CD4-positive, alpha-beta memory T cell (primary cell): ENCODE measurements at regions of chr16 and their contacts with region 1.

Region 1: GRCh38 chr16:66562407-66562806 is 3.8 kb upstream of the CMTM1 start:
- DNase-seq: peak in 3 of 5 donors; percentile 28 to 42 (median 31)
- H3K4me3 ChIP-seq: no peak overlapping the region
- H3K4me3 Mint-ChIP-seq: peak overlapping the region in 6 of 8 donors; percentile 15 to 86 (median 64)
- H3K27ac ChIP-seq: no peak overlapping the region
- H3K27ac Mint-ChIP-seq: peak overlapping the region; percentile 58 to 80 (median 73)
- H3K4me1 ChIP-seq: peaks cover 73% of the 10 kb centered on the region
- H3K4me1 Mint-ChIP-seq: peaks cover 53 to 74% (median 63%) of the 10 kb centered on the region in 4 donors
- H3K27me3 ChIP-seq: no peaks in the 10 kb centered on the region
- H3K27me3 Mint-ChIP-seq: no peaks in the 10 kb centered on the region

Region 2: DNA sequence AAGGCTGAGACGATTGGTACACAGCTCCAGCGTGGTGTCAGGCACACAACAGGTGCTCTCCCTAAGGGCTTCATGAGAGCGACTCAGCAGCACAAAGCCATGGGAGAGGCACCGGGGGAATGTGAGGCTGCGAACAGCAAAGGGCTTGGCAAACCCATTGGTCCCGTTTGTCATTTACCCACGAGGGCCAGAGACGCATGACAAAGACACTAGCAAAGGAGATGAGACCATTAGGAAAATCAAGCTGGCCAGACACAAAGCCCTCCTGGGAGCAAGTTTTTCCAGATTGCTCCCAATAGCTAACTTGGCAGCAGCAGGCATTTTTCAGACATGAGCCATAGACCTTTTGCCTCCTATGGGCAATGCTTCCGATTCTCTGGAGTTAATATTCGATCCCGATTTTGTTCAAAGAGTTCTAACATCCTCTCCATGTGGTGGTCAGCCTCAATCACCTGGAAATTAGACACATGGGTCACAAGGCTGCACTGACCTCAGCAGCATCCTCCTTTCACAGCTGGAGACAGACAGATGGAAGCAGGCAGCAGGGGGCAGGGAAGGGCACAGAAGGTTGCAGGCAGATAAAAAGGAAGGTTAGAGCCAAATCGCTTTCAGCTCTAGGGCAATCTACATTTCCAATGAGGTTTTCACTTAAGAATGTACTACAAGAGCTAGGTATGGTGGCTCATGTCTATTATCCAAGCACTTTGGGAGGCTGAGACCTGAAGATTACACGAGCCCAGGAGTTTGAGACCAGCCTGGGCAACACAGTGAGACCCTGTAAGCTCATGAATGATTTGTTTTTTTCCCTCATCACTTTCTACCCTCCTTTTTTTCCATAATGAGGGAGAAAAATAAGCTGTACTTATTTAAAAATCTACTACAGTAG is 50.5 kb before region 1 on chr16:
- CTCF ChIA-PET with region 1: interaction called, 28 read pairs
- POLR2A ChIA-PET with region 1: interaction called, 9 read pairs
- intact Hi-C with region 1: no loop called
- DNase-seq: no peak
- H3K4me3 ChIP-seq: no peak overlapping the region
- H3K4me3 Mint-ChIP-seq: peak overlapping the region in 1 of 8 donors; percentile 50
- H3K27ac ChIP-seq: no peak overlapping the region
- H3K27ac Mint-ChIP-seq: peak overlapping the region in 5 of 7 donors; percentile 13 to 79 (median 30)
- H3K4me1 ChIP-seq: peaks cover 39% of the 10 kb centered on the region
- H3K4me1 Mint-ChIP-seq: peaks cover 23 to 51% (median 32%) of the 10 kb centered on the region in 4 donors
- H3K27me3 ChIP-seq: no peaks in the 10 kb centered on the region
- H3K27me3 Mint-ChIP-seq: no peaks in the 10 kb centered on the region

Region 3: DNA sequence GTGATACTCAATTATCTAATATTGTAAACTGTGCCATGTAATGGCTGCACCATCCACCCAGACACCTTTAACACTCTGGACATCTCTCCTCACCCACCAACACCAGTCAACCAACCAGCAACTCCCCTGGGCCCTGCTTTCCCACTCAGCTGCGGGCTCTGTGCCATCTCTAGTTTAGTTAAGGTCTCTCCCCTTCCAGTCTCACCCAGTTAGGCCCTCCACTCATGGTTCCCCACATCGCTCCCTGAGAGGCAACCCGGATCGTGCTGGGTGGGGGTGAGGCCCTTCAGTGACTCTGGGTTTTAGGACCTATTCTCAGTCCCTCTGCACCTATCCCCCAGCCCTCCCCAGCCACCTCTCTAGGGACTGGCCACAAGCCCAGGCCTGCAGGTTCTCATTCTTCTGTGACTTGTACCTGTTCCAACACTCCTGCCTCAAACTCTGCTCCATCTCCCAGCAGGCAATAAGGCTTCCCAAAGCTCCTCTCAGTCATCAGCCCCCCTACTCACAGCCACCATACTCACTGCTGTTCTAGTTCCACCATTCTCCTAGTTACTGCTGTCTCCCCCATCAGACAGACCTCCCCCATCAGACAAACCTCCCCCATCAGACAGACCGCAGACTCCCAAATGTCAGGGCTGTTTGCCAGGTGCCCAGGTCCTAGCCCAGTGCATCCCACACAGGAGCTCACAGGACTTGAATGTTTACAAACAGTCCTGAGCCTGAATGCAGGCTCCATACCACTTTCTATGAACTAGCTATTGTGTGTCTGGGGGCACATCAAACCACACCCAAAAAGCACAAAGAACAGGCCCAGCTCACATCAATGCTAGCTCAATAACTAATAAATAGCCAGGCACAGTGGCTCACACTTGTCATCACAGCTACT is 15.1 kb before region 1 on chr16:
- CTCF ChIA-PET with region 1: interaction called, 58 read pairs
- POLR2A ChIA-PET with region 1: interaction called, 76 read pairs
- intact Hi-C with region 1: loop called (anchors 1 kb)
- DNase-seq: no peak
- H3K4me3 ChIP-seq: no peak overlapping the region
- H3K4me3 Mint-ChIP-seq: peak overlapping the region in 1 of 8 donors; percentile 40
- H3K27ac ChIP-seq: no peak overlapping the region
- H3K27ac Mint-ChIP-seq: peak overlapping the region; percentile 19 to 97 (median 78)
- H3K4me1 ChIP-seq: peaks cover 47% of the 10 kb centered on the region
- H3K4me1 Mint-ChIP-seq: peaks cover 31 to 46% (median 39%) of the 10 kb centered on the region in 4 donors
- H3K27me3 ChIP-seq: no peaks in the 10 kb centered on the region
- H3K27me3 Mint-ChIP-seq: no peaks in the 10 kb centered on the region

Region 4: DNA sequence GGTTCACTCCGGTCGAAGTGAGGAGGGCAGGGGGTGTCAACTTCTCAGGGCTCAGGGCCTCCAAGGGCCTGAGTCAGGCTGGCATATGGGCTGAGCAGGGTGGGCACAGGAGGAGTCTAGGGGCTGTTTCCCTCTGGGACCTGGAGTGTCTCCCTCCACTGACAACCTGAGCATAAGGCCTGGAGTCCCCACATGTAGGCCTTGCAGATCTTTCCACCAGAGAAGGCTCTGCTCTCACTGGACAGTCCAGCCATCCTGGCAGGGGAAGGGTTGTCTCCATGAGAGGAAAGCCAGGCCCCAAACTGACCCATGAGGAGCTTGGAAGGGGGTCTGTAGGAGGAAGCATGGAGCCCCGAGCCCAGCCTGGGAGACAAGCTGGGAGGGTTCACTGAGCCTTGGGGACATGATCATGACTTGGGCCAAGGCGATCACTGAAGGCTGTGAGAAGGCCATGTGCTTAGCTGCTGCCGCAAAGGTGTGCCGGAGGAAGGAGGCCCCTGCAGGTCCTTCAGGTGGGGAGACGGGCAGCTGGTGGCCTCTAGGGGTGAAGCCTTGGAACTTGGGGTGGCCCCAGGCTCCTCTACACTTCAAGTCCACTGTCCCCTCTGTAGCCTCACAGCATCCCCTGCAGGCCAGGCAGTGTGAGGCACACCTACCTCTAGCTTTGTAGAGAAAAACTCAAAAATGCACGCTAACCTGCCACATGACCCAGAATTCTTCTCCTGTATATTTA is 26.7 kb after region 1 on chr16:
- CTCF ChIA-PET with region 1: interaction called, 57 read pairs
- POLR2A ChIA-PET with region 1: interaction called, 3 read pairs
- intact Hi-C with region 1: loop called (anchors 2 kb)
- DNase-seq: peak; percentile 64 to 74 (median 70)
- H3K4me3 ChIP-seq: no peak overlapping the region
- H3K4me3 Mint-ChIP-seq: peak overlapping the region; percentile 80 to 94 (median 87)
- H3K27ac ChIP-seq: no peak overlapping the region
- H3K27ac Mint-ChIP-seq: peak overlapping the region; percentile 48 to 96 (median 77)
- H3K4me1 ChIP-seq: peaks cover 20% of the 10 kb centered on the region
- H3K4me1 Mint-ChIP-seq: peaks cover 13 to 23% (median 19%) of the 10 kb centered on the region in 4 donors
- H3K27me3 ChIP-seq: no peaks in the 10 kb centered on the region
- H3K27me3 Mint-ChIP-seq: no peaks in the 10 kb centered on the region

Region 5: DNA sequence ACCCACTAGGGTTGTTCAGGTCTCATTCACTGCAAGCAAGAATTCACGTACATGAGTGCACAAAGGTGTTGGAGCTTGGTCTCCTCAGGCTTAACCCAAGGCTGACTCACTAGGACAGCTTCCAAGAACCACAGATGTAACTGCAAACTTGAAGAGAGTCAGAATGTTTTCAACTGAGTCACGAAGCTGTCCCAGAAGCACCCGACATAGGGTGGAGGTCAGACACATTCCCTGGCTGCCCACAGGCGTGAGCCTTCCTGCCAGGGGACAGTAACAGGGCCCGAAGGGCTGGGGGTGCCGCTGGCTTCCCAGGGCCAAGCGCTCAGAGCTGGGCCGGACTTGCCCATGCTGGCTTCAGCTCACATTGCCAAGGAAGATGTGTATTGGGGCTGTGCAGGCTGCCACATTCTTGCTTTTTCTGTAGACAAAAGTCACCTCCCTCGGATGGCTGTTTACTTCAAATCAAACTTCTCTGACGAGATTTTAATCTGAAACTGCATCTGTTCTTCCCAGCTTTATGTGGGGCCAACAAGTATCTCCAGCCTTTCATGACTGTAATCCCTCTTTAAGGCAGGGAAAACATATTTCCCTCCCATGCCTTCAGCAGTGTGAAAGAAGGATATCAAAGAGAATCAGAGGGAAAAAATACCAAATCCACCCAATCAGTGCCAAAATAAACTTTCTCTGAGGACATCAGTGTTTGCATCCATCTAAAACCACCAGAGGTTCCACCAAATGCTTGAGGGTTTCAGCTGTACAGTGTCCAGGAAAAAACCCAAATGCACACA is 56.4 kb after region 1 on chr16:
- CTCF ChIA-PET with region 1: no interaction called
- POLR2A ChIA-PET with region 1: no interaction called
- intact Hi-C with region 1: no loop called
- DNase-seq: no peak
- H3K4me3 ChIP-seq: no peak overlapping the region
- H3K4me3 Mint-ChIP-seq: no peak overlapping the region
- H3K27ac ChIP-seq: no peak overlapping the region
- H3K27ac Mint-ChIP-seq: no peak overlapping the region
- H3K4me1 ChIP-seq: no peaks in the 10 kb centered on the region
- H3K4me1 Mint-ChIP-seq: no peaks in the 10 kb centered on the region
- H3K27me3 ChIP-seq: no peaks in the 10 kb centered on the region
- H3K27me3 Mint-ChIP-seq: no peaks in the 10 kb centered on the region

Region 6: DNA sequence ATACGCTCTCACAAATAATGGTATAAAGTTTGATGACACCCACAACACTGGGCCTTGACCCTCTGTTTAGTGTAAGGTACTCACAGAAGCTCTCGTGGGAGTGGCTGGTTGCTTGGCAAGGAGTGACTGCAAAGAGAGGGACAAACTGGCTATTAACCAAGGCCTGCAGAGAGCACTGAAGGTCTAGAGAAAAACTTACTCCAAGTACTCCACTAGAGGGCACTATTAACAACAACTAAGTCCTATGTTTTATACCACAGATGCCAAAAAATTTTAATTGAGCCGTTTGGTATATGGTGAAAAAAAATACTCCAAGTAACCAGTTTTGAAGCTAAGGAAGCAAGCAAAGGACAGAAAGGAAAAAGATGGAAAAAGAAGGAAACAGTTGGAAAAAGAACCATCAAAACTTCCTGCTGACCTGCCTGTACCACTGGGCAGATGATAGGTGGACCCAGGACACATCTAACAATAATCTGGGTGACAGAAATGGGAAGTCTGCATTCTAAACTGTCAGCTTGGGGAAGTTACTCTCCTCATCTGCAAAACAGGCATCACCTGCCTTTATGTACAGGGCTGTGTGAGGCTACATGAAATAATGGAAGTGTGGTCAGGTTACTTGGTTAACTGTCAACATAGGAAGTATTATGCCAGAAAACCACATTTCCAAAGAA is 165.8 kb after region 1 on chr16:
- CTCF ChIA-PET with region 1: interaction called, 29 read pairs
- POLR2A ChIA-PET with region 1: no interaction called
- intact Hi-C with region 1: no loop called
- DNase-seq: peak in 4 of 5 donors; percentile 42 to 56 (median 46)
- H3K4me3 ChIP-seq: no peak overlapping the region
- H3K4me3 Mint-ChIP-seq: no peak overlapping the region
- H3K27ac ChIP-seq: no peak overlapping the region
- H3K27ac Mint-ChIP-seq: peak overlapping the region in 5 of 7 donors; percentile 12 to 73 (median 52)
- H3K4me1 ChIP-seq: no peaks in the 10 kb centered on the region
- H3K4me1 Mint-ChIP-seq: peaks cover 3 to 6% (median 5%) of the 10 kb centered on the region in 4 donors
- H3K27me3 ChIP-seq: no peaks in the 10 kb centered on the region
- H3K27me3 Mint-ChIP-seq: no peaks in the 10 kb centered on the region

Region 7: DNA sequence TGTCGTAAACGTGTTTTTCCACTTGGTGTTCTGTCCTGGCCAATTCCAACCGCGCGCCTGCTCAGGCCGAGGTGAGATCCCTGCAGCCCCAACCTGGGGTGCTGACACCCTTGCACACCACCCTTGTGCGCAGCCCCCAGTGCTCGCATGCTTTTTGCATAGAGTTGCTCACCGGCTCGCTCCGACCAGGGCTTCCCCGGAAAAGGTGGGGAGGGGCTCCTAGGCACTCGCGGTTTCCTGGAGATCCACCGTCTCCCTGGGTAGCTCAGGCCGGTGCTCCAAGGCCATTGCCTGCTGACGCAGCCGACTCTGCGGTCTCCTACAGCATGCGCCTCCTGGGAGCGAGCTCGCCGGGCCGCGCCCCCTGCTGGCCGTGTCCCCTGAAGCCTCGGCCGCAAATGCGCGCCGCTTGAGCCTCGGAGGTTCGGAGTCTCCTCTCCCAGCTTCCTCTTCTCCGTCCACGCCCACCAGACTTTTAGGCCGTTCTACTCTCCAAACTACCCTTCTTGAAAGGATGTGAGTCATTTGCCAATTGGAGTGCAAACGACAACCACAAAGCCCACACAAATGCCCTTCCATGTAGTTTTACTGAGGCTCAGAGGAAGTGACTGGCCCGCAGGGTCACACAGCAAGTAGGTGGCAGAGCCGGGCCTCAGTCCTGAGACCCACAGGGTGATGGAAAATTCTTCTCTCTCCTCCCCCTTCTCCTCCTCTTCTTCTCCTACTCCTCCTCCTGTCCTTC is 310.7 kb after region 1 on chr16:
- CTCF ChIA-PET with region 1: interaction called, 13 read pairs
- POLR2A ChIA-PET with region 1: no interaction called
- intact Hi-C with region 1: no loop called
- DNase-seq: peak; percentile 80 to 94 (median 82)
- H3K4me3 ChIP-seq: peak overlapping the region in 1 of 2 donors; percentile 52
- H3K4me3 Mint-ChIP-seq: peak overlapping the region; percentile 61 to 90 (median 82)
- H3K27ac ChIP-seq: peak overlapping the region; percentile 36
- H3K27ac Mint-ChIP-seq: peak overlapping the region; percentile 75 to 95 (median 86)
- H3K4me1 ChIP-seq: peaks cover 22% of the 10 kb centered on the region
- H3K4me1 Mint-ChIP-seq: peaks cover 18 to 37% (median 23%) of the 10 kb centered on the region in 4 donors
- H3K27me3 ChIP-seq: no peaks in the 10 kb centered on the region
- H3K27me3 Mint-ChIP-seq: no peaks in the 10 kb centered on the region